GM12878 (cell line): ENCODE measurements at regions of chr12 and their contacts with region 1.

Region 1: DNA sequence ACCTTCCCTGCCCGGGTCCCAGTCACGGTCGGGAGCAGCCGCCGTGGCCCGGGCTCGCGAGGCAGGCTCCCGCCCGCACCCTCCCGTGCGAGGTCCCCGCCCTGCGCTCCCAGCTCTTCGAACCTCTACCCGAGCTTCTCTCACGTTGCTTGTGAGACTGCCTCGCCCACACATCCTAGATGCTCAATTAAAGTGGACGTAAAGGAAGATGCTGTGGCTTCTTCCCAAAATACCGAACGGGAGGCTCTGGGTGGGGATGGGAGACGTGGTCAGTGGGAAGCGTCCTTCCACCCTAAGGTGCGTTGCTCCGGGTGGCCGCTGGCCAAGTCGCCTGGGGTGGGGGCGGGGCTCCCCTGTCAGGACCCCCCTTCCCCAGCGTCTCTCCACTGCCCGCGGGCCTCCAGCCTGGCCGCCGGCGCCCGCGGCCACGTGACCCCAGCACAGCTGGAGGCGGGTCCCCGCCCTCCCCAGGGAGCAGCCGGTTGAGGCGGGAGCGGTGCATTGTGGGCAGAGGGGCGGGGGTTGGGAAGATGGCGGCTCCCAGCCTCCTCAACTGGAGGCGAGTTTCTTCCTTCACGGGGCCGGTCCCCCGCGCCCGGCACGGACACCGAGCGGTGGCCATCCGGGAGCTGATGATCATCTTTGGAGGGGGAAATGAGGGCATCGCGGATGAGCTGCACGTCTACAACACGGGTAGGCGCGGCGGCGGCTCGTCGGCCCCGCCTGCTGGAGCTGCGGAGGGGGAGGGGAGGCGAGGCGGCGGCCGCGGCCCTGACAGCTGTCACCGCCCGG is at the start of gene HCFC2:
- DNase-seq: peak; percentile 61
- ATAC-seq: peak; percentile 94
- H3K4me3 ChIP-seq: peak within 1 kb of the TSS; percentile 88
- H3K27ac ChIP-seq: peak within 1 kb of the TSS; percentile 81
- H3K4me1 ChIP-seq: no peaks in the 10 kb centered on the region
- H3K27me3 ChIP-seq: no peaks in the 10 kb centered on the region; a peak in 1 of 4 replicates
- CTCF ChIP-seq: no peak
- EP300 ChIP-seq: peak in 1 of 2 experiments; percentile 17; a peak in 1 of 4 replicates
- POLR2A ChIP-seq: peak; percentile 81
- RAD21 ChIP-seq: no peak
- polyA plus RNA-seq, gene HCFC2: 1.8 to 3.8 TPM

Region 2: GRCh38 chr12:103858953-103859601 is 205.2 kb before region 1 on chr12:
- CTCF ChIA-PET with region 1: no interaction called
- POLR2A ChIA-PET with region 1: no interaction called
- RAD21 ChIA-PET with region 1: no interaction called
- SMC1A ChIA-PET with region 1: no interaction called
- in situ Hi-C with region 1: no loop called
- intact Hi-C with region 1: no loop called
- DNase-seq: no peak
- ATAC-seq: no peak
- H3K4me3 ChIP-seq: no peak overlapping the region
- H3K27ac ChIP-seq: no peak overlapping the region
- H3K4me1 ChIP-seq: no peaks in the 10 kb centered on the region
- H3K27me3 ChIP-seq: no peaks in the 10 kb centered on the region
- CTCF ChIP-seq: no peak
- EP300 ChIP-seq: no peak
- POLR2A ChIP-seq: no peak
- RAD21 ChIP-seq: no peak

Region 3: GRCh38 chr12:104083769-104084475 is 19.7 kb after region 1 on chr12:
- CTCF ChIA-PET with region 1: interaction called, 6 read pairs
- POLR2A ChIA-PET with region 1: no interaction called
- RAD21 ChIA-PET with region 1: interaction called, 6 read pairs
- SMC1A ChIA-PET with region 1: interaction called, 10 read pairs
- in situ Hi-C with region 1: no loop called
- intact Hi-C with region 1: no loop called
- DNase-seq: peak; percentile 36
- ATAC-seq: peak; percentile 93
- H3K4me3 ChIP-seq: no peak overlapping the region
- H3K27ac ChIP-seq: no peak overlapping the region
- H3K4me1 ChIP-seq: peaks cover 2% of the 10 kb centered on the region; the same call in 1 of the 2 replicates
- H3K27me3 ChIP-seq: no peaks in the 10 kb centered on the region
- CTCF ChIP-seq: no peak
- EP300 ChIP-seq: peak in 1 of 2 experiments; percentile 33; a peak in 1 of 4 replicates
- POLR2A ChIP-seq: no peak
- RAD21 ChIP-seq: no peak